Activated T-helper 2 cell treated with anti-CD3 and anti-CD28 coated beads, Interferon-gamma antibody, Interleukin-2, Interleukin-4, amounts not matched to agents 10 μg/mL and 5 μg/mL and 100 μg/mL, durations not matched to agents 14 hours and 24 hours and 36 hours (primary cell): ENCODE measurements at regions of chr10 and their contacts with region 1.

Region 1: DNA sequence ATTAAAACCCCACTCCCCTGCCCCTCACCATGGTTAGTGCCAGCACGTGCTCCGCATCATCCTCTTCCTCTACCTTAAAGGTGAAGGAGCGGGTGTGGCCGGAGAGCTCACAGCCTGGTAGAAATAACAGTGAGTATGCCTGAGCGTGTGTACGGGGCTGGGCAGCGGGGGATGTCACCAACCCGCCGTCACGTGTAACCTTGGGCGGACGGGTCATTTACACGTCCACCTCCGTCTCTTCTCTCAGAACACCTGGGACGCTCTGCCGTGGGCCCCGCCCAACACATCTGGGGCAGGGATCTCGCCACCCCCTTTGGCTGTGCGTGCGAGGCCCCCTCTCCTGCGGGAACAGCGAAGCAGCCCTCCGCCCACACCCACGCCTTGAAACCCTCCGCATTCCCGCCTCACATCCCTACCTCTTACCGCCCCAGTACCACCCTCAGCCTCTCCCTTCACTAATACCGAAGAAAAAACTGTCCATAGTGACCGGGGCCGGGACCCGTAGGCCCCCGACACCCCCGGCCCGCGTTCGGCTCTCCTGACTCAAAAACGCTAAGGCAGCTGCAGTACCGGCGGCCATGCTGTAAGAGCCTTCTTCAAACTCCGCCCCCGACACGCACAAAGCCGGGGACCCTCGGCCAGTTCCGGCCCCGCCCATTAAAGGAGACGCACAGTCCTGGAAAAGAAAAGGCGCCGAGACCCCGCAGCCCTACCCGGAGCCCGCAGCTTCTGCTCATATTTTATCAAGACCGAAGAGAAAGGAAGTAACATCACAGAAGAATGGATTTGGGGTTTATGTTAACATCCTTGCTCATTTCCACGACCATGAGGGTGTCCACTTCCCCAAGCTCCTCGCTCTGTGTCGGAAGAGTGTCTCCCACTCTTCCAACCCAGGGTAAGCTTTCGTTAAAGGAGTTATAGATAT is at the start of gene NPM3:
- DNase-seq: peak; percentile 81
- H3K4me3 Mint-ChIP-seq: peak within 1 kb of the TSS; percentile 100
- H3K27ac Mint-ChIP-seq: peak within 1 kb of the TSS; percentile 98
- H3K4me1 Mint-ChIP-seq: peaks cover 40% of the 10 kb centered on the region
- H3K27me3 Mint-ChIP-seq: peaks cover 7% of the 10 kb centered on the region
- total RNA-seq, gene NPM3: 139 and 140 TPM in 2 replicates

Region 2: DNA sequence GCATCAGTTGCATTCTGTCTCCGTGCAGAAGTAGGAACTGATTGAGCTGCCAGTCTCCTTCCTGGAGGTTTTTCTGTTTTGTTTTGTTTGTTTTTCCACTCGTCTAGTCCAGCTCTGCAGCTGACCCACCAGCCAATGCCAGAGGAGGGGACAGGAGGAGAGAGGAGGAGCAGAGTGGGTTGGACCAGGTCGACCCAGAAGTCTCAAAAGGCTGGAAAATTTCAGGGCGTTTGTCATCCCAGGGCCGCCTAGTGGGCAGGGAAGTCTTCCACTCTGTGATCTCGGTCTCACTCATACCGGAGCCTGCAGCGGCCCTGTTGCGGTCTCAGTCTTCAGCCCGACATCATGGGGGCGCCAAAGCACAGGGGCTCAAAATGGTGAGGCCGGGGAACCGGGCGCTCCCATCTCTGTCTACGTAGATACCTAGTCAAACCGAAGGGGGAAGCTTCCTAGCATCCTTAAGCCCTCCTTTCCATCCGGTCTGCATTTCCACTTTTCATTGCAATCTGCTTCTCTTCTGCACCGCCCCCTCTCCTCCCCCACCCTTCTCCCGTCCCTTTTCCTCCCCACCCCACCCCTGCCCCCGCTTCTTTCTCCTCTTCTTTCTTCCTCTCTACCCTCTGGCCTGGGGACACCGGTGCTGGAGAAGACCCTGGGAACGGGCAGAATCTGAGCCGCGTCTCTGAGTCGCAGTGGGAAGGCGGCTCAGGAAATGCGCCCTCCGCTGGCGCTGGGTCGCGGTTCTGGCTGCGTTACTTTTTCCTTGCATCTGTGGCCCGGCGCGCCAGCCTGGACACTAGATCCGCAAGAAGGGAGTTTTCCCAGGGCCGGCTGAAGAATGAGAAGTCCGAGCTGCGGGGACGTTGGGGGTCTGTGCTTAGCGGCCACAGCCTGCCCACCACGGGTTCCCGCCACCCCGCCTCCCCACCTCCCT is 1053.9 kb before region 1 on chr10:
- intact Hi-C with region 1: loop called (anchors 10 kb)
- DNase-seq: no peak
- H3K4me3 Mint-ChIP-seq: no peak overlapping the region
- H3K27ac Mint-ChIP-seq: no peak overlapping the region
- H3K4me1 Mint-ChIP-seq: peaks cover 8% of the 10 kb centered on the region
- H3K27me3 Mint-ChIP-seq: peaks cover 87% of the 10 kb centered on the region

Region 3: DNA sequence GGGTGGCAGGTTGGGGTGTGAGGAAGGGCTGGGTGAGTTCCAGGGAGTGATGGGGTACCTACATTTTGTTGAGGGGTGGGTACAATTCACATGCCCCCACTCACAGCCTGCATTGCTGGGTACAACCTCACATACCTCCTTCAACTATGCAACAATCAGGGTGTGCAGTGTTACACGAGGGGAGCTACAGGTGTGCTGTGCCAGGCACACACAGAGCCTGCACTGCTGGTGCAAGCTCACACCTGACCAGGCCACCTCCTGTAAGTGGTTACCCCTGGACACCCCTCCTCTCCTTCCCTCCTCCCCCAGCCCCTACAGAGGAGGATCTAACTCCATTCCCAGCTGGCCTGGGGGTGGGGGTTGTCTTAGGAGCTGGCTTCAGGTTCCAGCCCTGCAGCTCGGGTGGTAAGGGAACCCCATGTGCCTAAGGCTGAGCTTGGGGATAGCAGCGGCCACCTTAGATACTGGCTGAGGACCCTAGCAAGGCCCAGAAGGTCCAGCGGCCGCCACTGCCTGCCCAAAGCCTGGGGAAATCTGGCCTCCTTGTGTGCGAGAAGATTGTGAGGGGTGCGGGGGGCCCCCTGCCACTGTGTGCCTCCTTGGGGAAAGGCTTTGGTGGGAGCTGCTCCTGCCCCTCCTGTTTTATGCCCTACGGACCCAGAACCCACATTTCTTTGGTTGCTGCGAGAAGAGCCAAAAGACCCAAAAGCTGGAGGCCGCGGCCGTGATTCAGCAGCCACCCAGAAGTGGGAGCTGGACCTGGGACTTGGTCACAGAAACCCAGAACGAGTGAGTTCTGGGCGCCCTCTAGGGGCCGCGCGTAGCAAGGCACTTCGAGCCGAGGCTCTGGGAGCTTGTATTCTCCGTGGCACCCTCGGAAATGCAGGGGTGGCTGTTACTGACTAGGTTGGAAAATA is 641.2 kb before region 1 on chr10:
- intact Hi-C with region 1: loop called (anchors 10 kb)
- DNase-seq: peak; percentile 66
- H3K4me3 Mint-ChIP-seq: no peak overlapping the region
- H3K27ac Mint-ChIP-seq: no peak overlapping the region
- H3K4me1 Mint-ChIP-seq: peaks cover 6% of the 10 kb centered on the region
- H3K27me3 Mint-ChIP-seq: peaks cover 86% of the 10 kb centered on the region

Region 4: DNA sequence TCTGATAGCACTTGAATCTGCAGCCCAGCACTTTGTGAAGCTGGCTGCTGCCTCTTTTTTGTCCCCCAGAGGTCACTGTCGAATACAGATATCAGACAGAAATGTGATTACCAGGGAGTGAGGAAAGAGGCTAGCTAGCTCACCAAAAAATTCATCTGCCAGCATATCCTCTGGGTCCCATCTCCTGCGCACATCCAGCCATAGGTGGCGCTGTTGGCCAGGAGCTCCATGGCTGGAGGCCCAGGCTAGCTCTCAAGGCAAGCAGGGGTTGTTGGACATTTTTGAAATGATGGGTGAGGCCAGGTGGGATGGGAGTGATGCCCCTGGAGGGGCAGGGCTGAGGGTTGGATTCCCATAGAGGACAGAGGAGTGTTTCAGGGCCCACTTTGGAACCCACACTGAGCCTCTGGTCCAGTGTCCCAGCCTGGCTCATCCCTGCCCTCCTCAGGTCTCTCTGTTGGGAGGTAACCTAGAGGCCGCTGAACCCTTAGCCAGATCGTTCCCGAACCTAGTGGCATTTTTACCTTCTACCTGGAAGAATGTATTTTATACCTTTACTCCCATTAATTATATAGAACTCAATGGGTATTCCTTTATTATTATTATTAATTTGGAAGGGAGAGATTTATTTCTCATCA is 180.2 kb before region 1 on chr10:
- intact Hi-C with region 1: loop called (anchors 1 kb)
- DNase-seq: peak; percentile 62
- H3K4me3 Mint-ChIP-seq: no peak overlapping the region
- H3K27ac Mint-ChIP-seq: no peak overlapping the region
- H3K4me1 Mint-ChIP-seq: no peaks in the 10 kb centered on the region
- H3K27me3 Mint-ChIP-seq: no peaks in the 10 kb centered on the region

Region 5: GRCh38 chr10:101693978-101694673 is 88.9 kb before region 1 on chr10:
- intact Hi-C with region 1: loop called (anchors 5 kb)
- DNase-seq: peak; percentile 72
- H3K4me3 Mint-ChIP-seq: peak overlapping the region; percentile 95
- H3K27ac Mint-ChIP-seq: peak overlapping the region; percentile 96
- H3K4me1 Mint-ChIP-seq: peaks cover 16% of the 10 kb centered on the region
- H3K27me3 Mint-ChIP-seq: no peaks in the 10 kb centered on the region

Region 6: GRCh38 chr10:101818119-101818871 is 35.2 kb after region 1 on chr10 and contains the start of gene OGA:
- intact Hi-C with region 1: loop called (anchors 1 kb)
- DNase-seq: peak; percentile 97
- H3K4me3 Mint-ChIP-seq: peak within 1 kb of the TSS; percentile 90
- H3K27ac Mint-ChIP-seq: peak within 1 kb of the TSS; percentile 95
- H3K4me1 Mint-ChIP-seq: peaks cover 40% of the 10 kb centered on the region
- H3K27me3 Mint-ChIP-seq: no peaks in the 10 kb centered on the region
- total RNA-seq, gene OGA: 119 and 122 TPM in 2 replicates

Region 7: DNA sequence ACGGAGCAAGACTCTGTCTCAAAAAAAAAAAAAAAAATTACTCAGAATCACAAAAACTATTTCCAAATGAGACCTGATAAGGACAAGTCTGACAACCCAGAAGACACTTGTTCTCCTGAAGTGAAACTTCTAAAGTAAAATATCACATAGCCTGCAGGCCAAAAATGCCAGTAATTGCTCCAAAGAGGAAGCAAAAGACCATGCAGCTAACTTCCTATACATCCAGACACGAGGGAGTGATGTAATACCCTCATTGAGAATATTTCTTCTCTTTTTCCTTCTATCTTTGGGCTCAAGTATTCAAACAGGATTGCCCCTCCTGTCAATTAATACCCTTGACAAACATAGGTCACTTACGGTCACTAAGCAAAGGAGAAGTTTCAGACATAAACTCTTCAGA is 241.7 kb after region 1 on chr10:
- intact Hi-C with region 1: no loop called
- DNase-seq: no peak
- H3K4me3 Mint-ChIP-seq: no peak overlapping the region
- H3K27ac Mint-ChIP-seq: no peak overlapping the region
- H3K4me1 Mint-ChIP-seq: no peaks in the 10 kb centered on the region
- H3K27me3 Mint-ChIP-seq: no peaks in the 10 kb centered on the region